PC-3 (cell line): ENCODE measurements at regions of chr15 and their contacts with region 1.

Region 1: GRCh38 chr15:38002883-38003477 is 68.5 kb downstream of the TMCO5A start:
- DNase-seq: peak; percentile 80
- ATAC-seq: peak; percentile 95
- H3K4me3 ChIP-seq: no peak overlapping the region
- H3K27ac ChIP-seq: no peak overlapping the region
- H3K4me1 ChIP-seq: 0 out of 2 replicates have a peak, but pooled peaks cover 4% of the 10 kb centered on the region
- H3K27me3 ChIP-seq: no peaks in the 10 kb centered on the region
- CTCF ChIP-seq: peak; percentile 91

Region 2: DNA sequence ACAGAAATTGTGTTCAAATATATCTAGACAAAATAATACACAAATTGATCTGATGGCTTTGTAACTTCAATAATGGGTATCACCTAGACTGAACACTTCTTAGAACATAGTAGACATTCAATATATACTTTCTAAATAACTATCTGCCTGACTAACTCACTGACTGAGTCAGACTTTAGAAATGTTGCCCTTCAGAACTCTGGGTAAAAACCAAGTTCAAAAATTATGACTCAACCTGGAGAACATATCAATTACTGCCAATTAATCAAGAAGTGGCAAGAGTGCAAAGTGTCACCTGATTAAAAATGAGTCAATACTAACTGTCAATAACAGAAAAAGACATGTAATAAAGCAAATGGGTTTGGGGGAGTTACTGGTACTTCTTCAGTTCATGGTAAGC is 213.1 kb before region 1 on chr15:
- CTCF ChIA-PET with region 1: no interaction called
- POLR2A ChIA-PET with region 1: no interaction called
- intact Hi-C with region 1: no loop called
- DNase-seq: peak; percentile 72
- ATAC-seq: peak; percentile 70
- H3K4me3 ChIP-seq: no peak overlapping the region
- H3K27ac ChIP-seq: no peak overlapping the region
- H3K4me1 ChIP-seq: peaks cover 20% of the 10 kb centered on the region
- H3K27me3 ChIP-seq: peaks cover 15% of the 10 kb centered on the region; the same call in 1 of the 2 replicates
- CTCF ChIP-seq: no peak

Region 3: GRCh38 chr15:37856109-37856508 is 146.9 kb before region 1 on chr15:
- CTCF ChIA-PET with region 1: no interaction called
- POLR2A ChIA-PET with region 1: no interaction called
- intact Hi-C with region 1: no loop called
- DNase-seq: no peak
- ATAC-seq: no peak
- H3K4me3 ChIP-seq: no peak overlapping the region
- H3K27ac ChIP-seq: no peak overlapping the region
- H3K4me1 ChIP-seq: no peaks in the 10 kb centered on the region
- H3K27me3 ChIP-seq: peaks cover 52% of the 10 kb centered on the region
- CTCF ChIP-seq: no peak

Region 4: DNA sequence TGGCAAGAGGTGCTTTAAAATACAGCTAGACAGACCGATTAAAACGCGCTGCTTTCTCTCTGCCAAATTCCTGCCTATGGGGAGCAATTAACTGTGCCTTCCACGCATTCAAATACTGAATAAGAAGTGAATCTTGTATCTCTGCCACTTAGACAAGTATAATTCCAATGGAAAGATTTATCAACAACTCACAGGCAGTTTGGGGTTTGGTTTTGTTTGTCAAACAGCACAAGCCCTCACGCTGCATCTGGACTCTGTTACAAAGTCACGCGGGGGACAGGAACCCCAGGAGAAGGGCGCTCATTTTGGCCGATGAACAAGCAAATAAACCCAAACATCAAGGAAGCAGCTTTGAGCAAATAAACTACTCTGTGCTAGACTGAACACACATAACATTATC is 130.3 kb before region 1 on chr15:
- CTCF ChIA-PET with region 1: no interaction called
- POLR2A ChIA-PET with region 1: no interaction called
- intact Hi-C with region 1: no loop called
- DNase-seq: no peak
- ATAC-seq: no peak; the same call in 1 of the 2 replicates
- H3K4me3 ChIP-seq: no peak overlapping the region
- H3K27ac ChIP-seq: no peak overlapping the region
- H3K4me1 ChIP-seq: peaks cover 14% of the 10 kb centered on the region
- H3K27me3 ChIP-seq: peaks cover 64% of the 10 kb centered on the region
- CTCF ChIP-seq: no peak

Region 5: GRCh38 chr15:37940876-37941275 is 62.1 kb before region 1 on chr15:
- CTCF ChIA-PET with region 1: no interaction called
- POLR2A ChIA-PET with region 1: interaction called, 19 read pairs
- intact Hi-C with region 1: no loop called
- DNase-seq: no peak
- ATAC-seq: no peak
- H3K4me3 ChIP-seq: no peak overlapping the region
- H3K27ac ChIP-seq: no peak overlapping the region
- H3K4me1 ChIP-seq: no peaks in the 10 kb centered on the region
- H3K27me3 ChIP-seq: peaks cover 9% of the 10 kb centered on the region; the same call in 1 of the 2 replicates
- CTCF ChIP-seq: no peak

Region 6: DNA sequence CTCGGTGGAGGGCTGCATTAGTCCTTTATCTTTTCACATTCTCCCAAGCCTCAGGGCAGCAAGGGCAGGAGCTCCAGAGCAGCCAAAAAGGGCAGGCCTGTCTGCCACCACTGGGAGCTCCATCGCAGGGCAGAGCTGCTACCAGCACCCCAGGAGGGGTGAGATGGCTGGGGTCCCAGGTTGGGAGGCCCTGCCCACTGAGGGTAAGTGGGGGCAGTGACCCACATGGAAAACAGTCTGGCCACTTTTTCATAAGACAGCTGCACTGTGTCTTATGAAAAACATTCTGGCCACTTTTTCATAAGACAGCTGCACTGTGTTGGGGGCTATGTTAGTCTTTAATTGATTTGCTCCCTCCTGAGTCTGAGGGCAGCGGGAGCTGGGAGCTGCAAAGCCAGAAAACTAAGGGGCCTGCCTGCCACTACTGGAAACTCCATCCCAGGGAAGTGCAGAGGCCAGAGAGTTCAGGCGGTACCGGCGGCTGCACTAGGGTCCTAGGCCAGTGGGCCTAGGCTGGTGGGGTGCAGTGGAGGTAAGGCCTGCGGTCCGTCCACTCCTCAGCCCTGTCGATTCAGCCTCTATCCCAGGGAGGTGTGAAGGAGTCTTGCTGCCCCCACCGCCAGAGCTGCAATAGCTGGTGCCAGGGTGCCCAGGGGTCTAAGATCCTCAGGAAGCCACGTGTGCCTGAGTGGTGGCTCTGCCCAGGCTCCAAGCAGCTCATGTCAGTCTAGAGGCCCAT is 23.1 kb before region 1 on chr15:
- CTCF ChIA-PET with region 1: no interaction called
- POLR2A ChIA-PET with region 1: no interaction called
- intact Hi-C with region 1: no loop called
- DNase-seq: no peak
- ATAC-seq: no peak
- H3K4me3 ChIP-seq: no peak overlapping the region
- H3K27ac ChIP-seq: no peak overlapping the region
- H3K4me1 ChIP-seq: no peaks in the 10 kb centered on the region
- H3K27me3 ChIP-seq: no peaks in the 10 kb centered on the region
- CTCF ChIP-seq: no peak

Region 7: GRCh38 chr15:38041576-38041975 is 38.6 kb after region 1 on chr15:
- CTCF ChIA-PET with region 1: no interaction called
- POLR2A ChIA-PET with region 1: no interaction called
- intact Hi-C with region 1: loop called (anchors 5 kb)
- DNase-seq: peak; percentile 78
- ATAC-seq: peak; percentile 70
- H3K4me3 ChIP-seq: no peak overlapping the region
- H3K27ac ChIP-seq: peak overlapping the region; percentile 72
- H3K4me1 ChIP-seq: peaks cover 58% of the 10 kb centered on the region
- H3K27me3 ChIP-seq: no peaks in the 10 kb centered on the region
- CTCF ChIP-seq: no peak

Region 8: DNA sequence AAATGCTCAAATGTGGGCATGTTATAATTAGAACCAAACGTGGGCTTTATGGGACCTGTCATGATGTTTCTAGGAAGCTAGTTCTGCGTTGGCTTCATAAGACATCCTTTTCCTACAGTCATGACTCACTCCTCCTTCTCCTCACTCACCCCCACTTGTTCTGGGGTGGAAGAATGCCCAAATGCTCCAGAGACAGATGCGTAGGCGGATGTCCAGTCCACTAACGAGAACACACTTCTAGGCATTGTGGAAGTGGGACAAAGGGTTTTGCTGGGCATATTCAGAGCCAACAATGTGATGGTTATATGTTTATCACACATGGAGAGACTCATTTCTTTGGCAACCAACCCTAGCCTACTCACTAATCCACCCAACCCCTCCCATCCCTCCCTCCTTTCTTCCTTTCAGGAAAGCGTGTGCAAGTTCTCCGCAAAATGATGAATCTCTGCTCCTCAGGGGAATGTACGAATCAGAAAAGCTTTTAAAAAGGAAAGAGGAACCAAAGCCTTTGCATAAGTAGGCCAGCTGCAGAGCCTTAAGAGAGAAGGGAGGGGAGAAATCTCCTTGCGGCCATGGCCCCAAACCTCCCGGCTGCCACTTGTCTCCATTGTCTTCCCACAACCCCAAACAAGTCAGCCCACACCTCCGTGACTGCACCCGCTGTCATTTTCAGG is 126.7 kb after region 1 on chr15:
- CTCF ChIA-PET with region 1: no interaction called
- POLR2A ChIA-PET with region 1: no interaction called
- intact Hi-C with region 1: loop called (anchors 2 kb)
- DNase-seq: peak; percentile 99
- ATAC-seq: peak; percentile 86
- H3K4me3 ChIP-seq: peak overlapping the region; percentile 63
- H3K27ac ChIP-seq: peak overlapping the region; percentile 96
- H3K4me1 ChIP-seq: peaks cover 47% of the 10 kb centered on the region
- H3K27me3 ChIP-seq: no peaks in the 10 kb centered on the region
- CTCF ChIP-seq: no peak

Region 9: DNA sequence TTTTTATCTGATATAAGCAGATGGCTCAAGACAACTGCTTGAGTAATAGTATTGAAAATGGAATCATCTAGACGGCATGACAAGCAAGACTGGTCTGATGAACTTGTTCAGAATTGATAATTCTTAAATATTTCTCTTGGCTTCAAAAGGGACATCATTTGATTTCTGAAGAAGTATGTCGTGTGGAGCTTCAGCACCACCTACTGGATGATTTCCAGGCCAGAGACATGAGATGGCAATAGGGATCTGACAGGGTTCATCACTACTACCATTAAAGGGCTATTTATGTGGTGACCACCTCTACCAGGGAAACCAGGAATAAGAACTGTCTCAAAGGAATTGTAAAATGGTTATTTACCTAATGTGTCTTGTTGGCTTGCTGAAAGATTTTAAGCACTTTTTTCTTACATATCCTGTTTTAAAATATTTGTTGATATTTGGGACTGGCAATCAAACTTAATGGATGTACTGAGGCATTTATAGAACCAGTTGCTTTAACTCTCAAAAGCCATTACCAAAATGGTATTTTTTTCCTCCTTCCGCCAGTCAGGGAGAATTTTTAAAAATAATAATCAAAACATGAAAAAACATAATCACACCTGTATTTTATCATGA is 351.4 kb after region 1 on chr15:
- CTCF ChIA-PET with region 1: interaction called, 4 read pairs
- POLR2A ChIA-PET with region 1: no interaction called
- intact Hi-C with region 1: loop called (anchors 1 kb)
- DNase-seq: peak; percentile 87
- ATAC-seq: peak; percentile 85
- H3K4me3 ChIP-seq: no peak overlapping the region
- H3K27ac ChIP-seq: no peak overlapping the region
- H3K4me1 ChIP-seq: no peaks in the 10 kb centered on the region
- H3K27me3 ChIP-seq: no peaks in the 10 kb centered on the region
- CTCF ChIP-seq: peak; percentile 91

Region 10: GRCh38 chr15:38389924-38390542 is 387.1 kb after region 1 on chr15:
- CTCF ChIA-PET with region 1: interaction called, 3 read pairs
- POLR2A ChIA-PET with region 1: no interaction called
- intact Hi-C with region 1: loop called (anchors 1 kb)
- DNase-seq: peak; percentile 81
- ATAC-seq: peak; percentile 93
- H3K4me3 ChIP-seq: no peak overlapping the region
- H3K27ac ChIP-seq: no peak overlapping the region
- H3K4me1 ChIP-seq: no peaks in the 10 kb centered on the region
- H3K27me3 ChIP-seq: no peaks in the 10 kb centered on the region
- CTCF ChIP-seq: peak; percentile 93